ENCODE measurements at regions of chr14 and their contacts with region 1.

Region 1: DNA sequence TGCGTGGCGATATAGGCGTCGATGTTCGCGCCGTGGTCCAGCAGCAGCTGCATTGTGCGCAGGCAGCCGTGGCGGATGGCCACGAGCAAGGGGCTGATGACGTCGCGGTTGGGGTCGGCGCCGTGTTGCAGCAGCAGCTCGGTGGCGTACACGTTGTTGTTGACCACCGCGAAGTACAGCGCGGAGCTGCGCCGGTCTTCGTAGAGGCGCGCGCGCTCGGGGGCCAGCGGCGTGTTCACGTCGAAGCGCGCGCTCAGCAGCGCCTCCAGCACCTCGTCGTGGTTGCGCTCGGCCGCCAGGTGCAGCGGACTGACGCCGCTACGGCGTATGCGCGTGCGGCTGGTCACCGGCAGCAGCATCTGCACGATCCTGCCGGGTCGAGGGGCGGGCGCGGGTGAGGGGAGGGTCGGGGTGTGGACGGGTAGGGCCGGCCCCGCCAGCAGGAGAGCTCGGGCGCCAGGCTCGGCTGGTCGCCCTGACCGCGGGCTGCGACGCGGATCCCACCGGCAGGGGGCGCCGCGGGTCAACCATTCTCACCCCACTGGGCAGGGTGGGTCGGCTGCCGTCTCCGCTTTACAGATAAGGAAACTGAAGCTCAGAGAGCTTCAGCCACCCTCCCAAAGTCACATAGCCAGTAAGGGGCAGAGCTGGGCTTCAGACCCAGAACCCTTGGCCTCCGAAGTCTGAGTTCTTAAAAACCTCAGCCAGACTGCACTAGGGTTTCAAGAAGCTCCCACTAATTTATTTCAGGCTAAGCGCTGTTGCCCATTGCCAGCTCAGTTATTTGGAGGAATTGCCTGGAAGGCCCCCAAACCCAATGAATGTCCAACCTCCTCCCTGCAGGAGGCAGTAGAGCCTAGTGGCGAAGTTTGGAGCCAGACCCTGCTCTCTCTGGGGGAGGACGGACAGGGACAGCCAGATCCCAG is 12.4 kb downstream of the FAM181A start:
- H3K4me3 ChIP-seq: peak overlapping the region; percentile 34
- H3K27ac ChIP-seq: no peak overlapping the region
- H3K4me1 ChIP-seq: peaks cover 14% of the 10 kb centered on the region
- CTCF ChIP-seq: peak; percentile 53; the same call in 1 of the 2 replicates

Region 2: DNA sequence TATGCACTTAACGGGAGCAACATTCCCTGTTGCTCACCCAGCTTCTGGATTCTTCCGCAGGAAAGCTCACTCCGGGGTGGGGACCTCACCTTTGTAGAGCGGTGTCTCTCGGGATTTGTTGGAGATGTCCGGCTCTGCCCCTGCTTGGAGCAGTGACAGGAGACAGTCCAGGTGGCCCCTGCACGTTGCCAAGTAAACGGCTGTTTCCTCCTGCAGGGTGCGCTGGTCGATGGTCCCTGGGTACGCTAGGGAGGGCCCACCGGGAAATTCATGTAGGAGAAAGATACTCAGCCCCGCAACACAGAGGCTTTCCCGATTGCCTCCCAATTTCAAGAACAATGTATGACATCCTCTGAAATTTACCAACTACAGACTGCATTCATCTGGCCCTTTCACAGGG is 13.7 kb after region 1 on chr14:
- CTCF ChIA-PET with region 1: interaction called, 25 read pairs
- POLR2A ChIA-PET with region 1: no interaction called
- H3K4me3 ChIP-seq: no peak overlapping the region
- H3K27ac ChIP-seq: no peak overlapping the region
- H3K4me1 ChIP-seq: no peaks in the 10 kb centered on the region
- CTCF ChIP-seq: no peak

Region 3: GRCh38 chr14:93970549-93970946 is 31.0 kb after region 1 on chr14:
- CTCF ChIA-PET with region 1: interaction called, 91 read pairs
- POLR2A ChIA-PET with region 1: no interaction called
- H3K4me3 ChIP-seq: no peak overlapping the region
- H3K27ac ChIP-seq: no peak overlapping the region
- H3K4me1 ChIP-seq: no peaks in the 10 kb centered on the region
- CTCF ChIP-seq: peak; percentile 55; the same call in 1 of the 2 replicates

Region 4: DNA sequence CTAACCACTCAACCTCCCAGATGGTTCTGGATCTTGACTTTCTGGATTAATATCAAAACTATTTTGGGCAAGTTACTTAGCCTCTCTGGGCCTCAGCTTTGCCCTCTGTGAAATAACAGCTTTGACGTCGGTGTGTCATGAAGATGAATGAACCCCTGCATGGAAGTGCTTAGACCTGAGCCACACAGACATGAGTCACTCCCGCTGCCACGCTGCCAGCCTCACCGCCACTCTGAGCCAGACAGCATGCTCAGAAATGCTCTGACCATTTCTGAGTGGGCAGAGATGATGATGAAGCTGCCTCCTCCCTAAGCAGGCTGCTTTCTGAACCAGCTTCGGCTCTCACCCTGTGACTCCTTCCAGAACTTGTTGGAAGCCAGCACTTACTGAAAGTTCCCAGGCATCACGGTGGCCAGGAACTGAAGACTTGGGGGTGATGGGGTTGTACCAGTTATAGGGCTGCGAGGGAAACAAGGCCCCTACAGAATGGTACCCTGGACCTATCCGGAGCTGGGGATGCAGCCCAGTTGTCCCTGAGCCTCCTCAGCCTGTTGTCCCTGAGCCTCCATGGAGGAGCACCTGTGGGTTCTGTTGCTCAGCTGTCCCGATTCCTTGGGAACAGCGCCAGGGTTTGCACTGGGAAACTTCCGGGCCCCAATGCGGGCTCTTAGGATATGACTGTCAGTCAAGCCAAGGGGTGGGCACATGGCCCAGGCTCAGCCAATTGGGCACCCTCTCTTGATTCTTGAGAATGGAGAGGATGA is 55.5 kb after region 1 on chr14:
- CTCF ChIA-PET with region 1: interaction called, 111 read pairs
- POLR2A ChIA-PET with region 1: interaction called, 3 read pairs
- H3K4me3 ChIP-seq: no peak overlapping the region
- H3K27ac ChIP-seq: no peak overlapping the region
- H3K4me1 ChIP-seq: no peaks in the 10 kb centered on the region; the same call in 1 of the 2 replicates
- CTCF ChIP-seq: no peak

Region 5: DNA sequence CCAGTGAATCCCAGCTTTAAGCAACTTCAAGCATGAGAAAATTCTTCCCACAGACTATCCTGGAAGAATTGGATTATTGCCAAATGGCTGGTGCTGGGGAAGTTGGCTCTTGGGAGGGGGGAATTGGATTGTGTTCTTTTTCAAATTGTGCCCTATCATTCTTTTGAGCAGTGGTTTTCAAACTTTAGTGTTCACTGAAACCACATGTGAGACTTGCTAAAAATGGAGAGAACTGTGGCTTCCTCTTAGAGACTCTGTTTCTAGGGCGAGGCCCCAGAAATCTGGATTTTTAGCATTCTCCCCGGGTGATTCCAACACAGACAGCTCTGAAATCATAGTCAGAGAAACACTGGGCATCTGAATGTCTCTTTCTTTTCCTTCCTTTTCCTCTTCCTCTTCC is 72.2 kb after region 1 on chr14:
- CTCF ChIA-PET with region 1: interaction called, 11 read pairs
- POLR2A ChIA-PET with region 1: no interaction called
- H3K4me3 ChIP-seq: no peak overlapping the region
- H3K27ac ChIP-seq: no peak overlapping the region
- H3K4me1 ChIP-seq: peaks cover 3% of the 10 kb centered on the region; the same call in 1 of the 2 replicates
- CTCF ChIP-seq: no peak

Region 6: GRCh38 chr14:94180655-94181271 is 241.2 kb after region 1 on chr14:
- CTCF ChIA-PET with region 1: interaction called, 12 read pairs
- POLR2A ChIA-PET with region 1: no interaction called
- H3K4me3 ChIP-seq: no peak overlapping the region
- H3K27ac ChIP-seq: no peak overlapping the region
- H3K4me1 ChIP-seq: no peaks in the 10 kb centered on the region
- CTCF ChIP-seq: peak; percentile 48; the same call in 1 of the 2 replicates

Region 7: GRCh38 chr14:94448071-94448808 is 508.7 kb after region 1 on chr14:
- CTCF ChIA-PET with region 1: no interaction called
- POLR2A ChIA-PET with region 1: no interaction called
- H3K4me3 ChIP-seq: no peak overlapping the region
- H3K27ac ChIP-seq: no peak overlapping the region
- H3K4me1 ChIP-seq: no peaks in the 10 kb centered on the region
- CTCF ChIP-seq: no peak

Measured in HEK293 (cell line).